ENCODE measurements at regions of chr17 and their contacts with region 1.

Region 1: DNA sequence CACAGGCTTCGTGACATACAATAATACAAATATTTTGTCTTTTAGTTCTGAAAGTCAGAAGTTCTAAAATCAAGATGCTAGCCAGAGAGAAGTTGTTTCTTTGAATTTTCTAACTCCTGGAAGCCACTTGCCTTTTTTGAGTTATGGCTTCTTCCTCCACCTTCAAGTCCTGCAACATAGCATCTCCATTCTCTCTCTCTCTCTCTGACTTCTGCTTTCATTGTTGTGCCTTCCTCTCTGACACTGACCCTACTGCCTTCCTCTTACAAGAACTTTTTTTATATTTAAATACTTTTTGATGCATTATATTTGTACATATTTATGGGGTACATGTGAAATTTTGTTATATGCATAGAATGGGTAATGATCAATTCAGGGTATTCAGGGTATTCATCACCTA is 205.9 kb downstream of the MAP2K6 start:
- DNase-seq: no peak
- ATAC-seq: no peak
- H3K4me3 ChIP-seq: no peak overlapping the region
- H3K27ac ChIP-seq: no peak overlapping the region
- H3K4me1 ChIP-seq: no peaks in the 10 kb centered on the region
- H3K27me3 ChIP-seq: no peaks in the 10 kb centered on the region
- CTCF ChIP-seq: no peak
- EP300 ChIP-seq: no peak
- POLR2A ChIP-seq: no peak
- RAD21 ChIP-seq: no peak

Region 2: GRCh38 chr17:69672924-69673323 is 52.6 kb after region 1 on chr17:
- CTCF ChIA-PET with region 1: no interaction called
- POLR2A ChIA-PET with region 1: no interaction called
- RAD21 ChIA-PET with region 1: no interaction called
- SMC1A ChIA-PET with region 1: no interaction called
- in situ Hi-C with region 1: no loop called
- intact Hi-C with region 1: loop called (anchors 5 kb)
- DNase-seq: no peak
- ATAC-seq: no peak
- H3K4me3 ChIP-seq: no peak overlapping the region
- H3K27ac ChIP-seq: no peak overlapping the region
- H3K4me1 ChIP-seq: no peaks in the 10 kb centered on the region
- H3K27me3 ChIP-seq: no peaks in the 10 kb centered on the region
- CTCF ChIP-seq: no peak
- EP300 ChIP-seq: no peak
- POLR2A ChIP-seq: no peak
- RAD21 ChIP-seq: no peak